Panc1 (cell line): ENCODE measurements at regions of chr5 and their contacts with region 1.

Region 1: DNA sequence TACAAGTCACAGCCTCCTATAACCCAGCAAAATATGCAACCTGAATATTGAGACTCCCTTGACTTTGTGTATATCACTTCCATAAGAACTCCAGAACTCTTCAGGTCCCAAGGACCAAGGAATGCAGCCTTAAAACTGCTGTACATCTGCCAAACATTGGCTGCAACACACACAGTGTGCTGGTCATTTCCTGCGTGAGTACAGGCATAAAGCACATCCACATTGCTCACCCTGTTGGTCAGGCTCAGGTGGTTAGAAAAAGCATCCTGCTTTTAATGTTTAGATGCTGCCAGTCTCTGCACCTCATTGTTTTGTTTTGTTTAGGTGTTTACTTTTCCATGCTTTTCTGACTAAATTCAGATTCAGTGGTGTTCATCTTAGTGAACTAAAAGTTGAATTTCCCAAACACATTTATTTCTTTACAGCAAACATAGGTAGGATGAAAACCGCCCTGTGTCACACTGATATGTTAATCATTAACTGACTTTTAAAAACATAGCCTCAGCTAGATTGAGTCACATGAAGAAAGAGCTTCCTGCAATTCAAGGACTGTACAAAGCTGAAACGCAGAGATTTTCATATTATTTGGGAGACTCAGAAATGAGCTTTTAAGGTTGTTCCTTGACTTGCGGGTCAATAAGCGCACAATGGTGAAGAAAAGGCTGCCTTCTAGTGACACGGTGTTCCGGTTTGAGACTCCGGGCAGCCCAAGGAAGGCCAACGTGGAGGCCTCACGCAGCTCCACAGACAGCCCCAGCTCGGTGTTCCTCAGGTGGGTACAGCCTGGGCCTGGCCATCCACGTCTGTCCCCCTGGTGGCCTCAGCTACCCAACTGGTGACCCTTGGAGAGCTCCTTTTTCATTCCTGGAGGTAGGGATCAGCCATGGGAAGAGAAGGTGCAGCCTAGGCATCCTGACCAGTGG is 52.2 kb upstream of the GRAMD2B start:
- DNase-seq: no peak
- ATAC-seq: peak; percentile 85
- H3K4me3 ChIP-seq: no peak overlapping the region
- H3K27ac ChIP-seq: peak overlapping the region; percentile 67
- H3K4me1 ChIP-seq: peaks cover 23% of the 10 kb centered on the region
- H3K27me3 ChIP-seq: no peaks in the 10 kb centered on the region
- CTCF ChIP-seq: no peak

Region 2: DNA sequence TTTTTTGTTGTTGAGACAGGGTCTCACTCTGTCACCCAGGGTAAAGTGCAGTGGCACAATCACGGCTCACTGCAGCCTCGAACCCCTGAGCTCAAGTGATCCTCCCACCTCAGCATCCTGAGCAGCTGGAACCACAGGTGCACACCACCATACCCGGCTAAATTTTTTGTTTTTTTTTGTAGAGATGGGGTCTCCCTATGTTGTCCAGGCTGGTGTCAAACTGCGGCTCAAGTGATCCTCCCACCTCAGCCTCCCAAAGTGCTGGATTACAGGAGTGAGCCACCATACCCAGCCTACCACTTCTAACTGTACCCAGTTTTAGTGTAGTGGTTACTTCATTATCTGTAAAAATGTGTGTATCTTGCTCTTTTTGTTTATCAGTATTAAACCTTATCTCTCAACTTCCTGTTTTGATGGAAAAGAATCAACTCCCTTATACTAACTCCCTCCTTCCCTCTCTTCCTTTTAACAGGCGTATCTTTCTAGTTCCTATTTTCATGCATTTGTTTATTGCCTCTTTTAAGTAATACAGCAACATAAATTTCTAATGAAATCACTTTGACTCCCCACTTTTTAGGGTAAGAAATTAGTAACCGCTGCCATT is 85.3 kb after region 1 on chr5:
- CTCF ChIA-PET with region 1: interaction called, 12 read pairs
- POLR2A ChIA-PET with region 1: no interaction called
- in situ Hi-C with region 1: no loop called
- intact Hi-C with region 1: no loop called
- DNase-seq: no peak
- ATAC-seq: no peak
- H3K4me3 ChIP-seq: no peak overlapping the region
- H3K27ac ChIP-seq: no peak overlapping the region
- H3K4me1 ChIP-seq: no peaks in the 10 kb centered on the region
- H3K27me3 ChIP-seq: no peaks in the 10 kb centered on the region
- CTCF ChIP-seq: no peak